GM10248 (cell line): ENCODE measurements at regions of chr6 and their contacts with region 1.

Region 1: GRCh38 chr6:44237813-44238433 is 9.0 kb upstream of the HSP90AB1 start:
- DNase-seq: peak; percentile 87
- CTCF ChIP-seq: peak; percentile 95

Region 2: DNA sequence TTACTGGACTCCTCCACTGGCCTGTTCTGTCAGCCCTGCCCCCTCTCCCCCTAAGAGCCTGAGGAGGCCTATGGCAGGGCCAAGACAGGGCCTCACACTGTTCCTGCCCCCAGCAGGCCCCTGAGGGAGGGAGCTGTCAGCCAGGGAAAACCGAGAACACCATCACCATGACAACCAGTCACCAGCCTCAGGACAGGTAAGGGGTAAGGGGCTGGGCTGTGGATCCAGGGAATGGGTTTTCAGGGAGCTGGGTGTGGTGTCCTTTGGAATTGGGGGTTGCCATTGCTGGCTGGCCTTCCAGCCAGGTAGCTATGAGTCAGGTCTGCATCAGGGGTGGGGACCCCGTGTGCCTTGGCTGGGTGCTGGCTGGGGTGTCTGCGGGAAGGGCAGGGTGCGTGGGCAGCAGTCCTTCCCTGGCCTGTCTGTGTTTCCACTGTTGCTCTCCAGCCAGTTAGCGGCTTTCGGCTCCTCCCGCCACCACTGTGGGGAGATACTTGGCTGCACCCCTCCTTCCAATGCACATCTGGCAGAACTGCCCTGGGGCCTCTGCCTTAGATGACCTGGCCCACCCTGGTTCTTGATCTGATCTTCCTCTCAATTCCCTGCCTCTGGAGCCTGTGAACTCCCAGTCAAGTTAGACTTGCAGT is 10.7 kb before region 1 on chr6:
- CTCF ChIA-PET with region 1: interaction called, 116 read pairs
- POLR2A ChIA-PET with region 1: interaction called, 6 read pairs
- DNase-seq: no peak
- CTCF ChIP-seq: no peak

Region 3: GRCh38 chr6:44257025-44257752 is 19.3 kb after region 1 on chr6 and contains the start of gene SLC35B2:
- CTCF ChIA-PET with region 1: interaction called, 11 read pairs
- POLR2A ChIA-PET with region 1: interaction called, 3 read pairs
- DNase-seq: peak; percentile 79
- CTCF ChIP-seq: peak; percentile 89